ENCODE measurements at regions of chr1 and their contacts with region 1.

Region 1: DNA sequence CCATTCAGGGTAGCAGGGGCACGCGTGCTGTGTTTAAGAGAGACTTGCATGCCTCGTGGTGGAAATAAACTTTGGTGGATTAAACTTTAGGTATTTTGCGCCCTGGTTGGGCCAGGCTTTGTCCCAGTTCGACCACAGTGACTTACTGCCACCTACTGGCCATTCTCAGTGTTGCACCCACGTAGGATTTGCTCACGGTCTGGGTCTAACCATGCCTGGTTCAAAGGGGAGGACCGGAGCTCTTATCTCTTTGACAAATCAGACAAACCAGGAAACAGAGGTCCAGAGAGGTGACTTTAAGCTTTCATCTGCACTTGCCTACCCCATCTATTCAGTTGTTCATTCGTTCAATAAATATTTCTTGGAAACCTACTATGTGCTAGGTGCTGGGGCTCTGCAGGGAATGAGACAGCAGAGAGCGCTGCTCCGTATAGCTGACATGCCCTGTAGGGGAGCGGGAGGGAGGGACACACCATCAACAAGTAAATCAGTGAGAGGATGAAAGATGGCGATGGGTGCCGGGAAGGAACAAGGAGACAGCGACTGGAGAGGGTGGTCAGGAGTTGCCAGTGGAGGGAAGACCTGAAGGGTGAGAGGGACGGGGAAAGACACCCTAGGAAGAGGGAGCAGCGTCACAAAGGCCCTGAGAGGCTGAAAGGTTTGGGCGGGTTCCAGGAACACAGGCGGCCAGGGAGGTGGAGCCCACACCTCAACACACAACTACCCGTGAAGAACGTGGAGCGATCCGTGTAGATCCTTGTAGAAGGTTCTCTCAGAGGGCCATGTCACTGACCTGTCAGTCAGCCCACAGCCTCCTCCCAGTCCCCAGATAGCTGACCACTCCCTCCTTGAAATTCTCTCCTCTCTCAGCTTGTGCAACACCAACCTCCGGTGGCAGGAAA is 27.2 kb upstream of the TINAGL1 start:
- DNase-seq: peak; percentile 88
- H3K4me3 ChIP-seq: peak overlapping the region in 1 of 3 experiments; percentile 20
- H3K27ac ChIP-seq: peak overlapping the region; percentile 4
- H3K4me1 ChIP-seq: peaks cover 13% of the 10 kb centered on the region
- H3K27me3 ChIP-seq: no peaks in the 10 kb centered on the region
- CTCF ChIP-seq: peak; percentile 86 to 95
- POLR2A ChIP-seq: no peak

Region 2: DNA sequence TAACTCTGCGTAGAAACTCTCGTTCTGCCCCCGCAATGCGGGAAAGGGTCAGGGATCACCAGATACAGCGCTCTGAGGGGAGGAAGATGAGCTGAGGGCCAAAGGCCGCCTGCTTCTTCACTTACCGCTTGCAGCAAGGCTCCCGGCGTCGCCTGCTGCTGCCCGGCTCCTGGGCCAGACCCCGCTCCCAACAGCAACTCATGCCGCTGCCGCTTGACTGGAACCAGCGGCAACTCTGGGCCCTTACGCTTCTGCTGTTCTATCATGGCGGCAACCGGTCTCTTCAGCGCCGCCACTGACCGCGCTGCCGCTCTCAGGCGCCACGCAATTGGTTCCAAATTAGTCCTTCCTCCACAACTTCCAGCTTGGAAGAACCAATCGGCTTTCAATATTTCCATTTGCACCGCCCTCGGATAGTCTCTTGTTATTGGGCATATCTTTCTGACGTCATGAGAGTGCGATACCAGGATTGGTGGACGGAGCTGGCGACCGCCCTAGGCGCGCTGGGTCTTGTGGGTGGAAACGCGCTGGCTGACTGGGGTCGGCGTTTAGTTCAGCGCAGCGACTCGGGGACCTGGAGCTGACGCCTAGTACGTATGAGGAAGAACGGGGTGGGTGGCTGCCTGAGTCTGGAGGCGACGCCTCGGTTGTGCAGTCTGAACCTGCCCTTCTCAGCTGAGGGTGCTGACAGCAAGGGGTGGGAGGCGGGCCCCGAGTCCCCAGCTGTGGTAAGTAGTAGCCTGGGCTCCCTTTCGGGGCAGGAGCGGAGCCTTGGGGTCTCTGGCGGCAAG is 252.5 kb before region 1 on chr1 and contains the starts of genes SNRNP40 and ZCCHC17:
- CTCF ChIA-PET with region 1: no interaction called
- POLR2A ChIA-PET with region 1: no interaction called
- dilution Hi-C with region 1: no loop called
- intact Hi-C with region 1: loop called (anchors 1 kb)
- DNase-seq: peak; percentile 100
- H3K4me3 ChIP-seq: peak within 1 kb of the TSS; percentile 98 to 100 (median 98)
- H3K27ac ChIP-seq: peak within 1 kb of the TSS; percentile 81
- H3K4me1 ChIP-seq: peaks cover 20% of the 10 kb centered on the region
- H3K27me3 ChIP-seq: no peaks in the 10 kb centered on the region
- CTCF ChIP-seq: peak in 1 of 2 donors; percentile 13
- POLR2A ChIP-seq: peak; percentile 96
- total RNA-seq, gene SNRNP40: 78.1 and 85.3 TPM in 2 replicates
- total RNA-seq, gene ZCCHC17: 40.4 and 41.4 TPM in 2 replicates

Region 3: DNA sequence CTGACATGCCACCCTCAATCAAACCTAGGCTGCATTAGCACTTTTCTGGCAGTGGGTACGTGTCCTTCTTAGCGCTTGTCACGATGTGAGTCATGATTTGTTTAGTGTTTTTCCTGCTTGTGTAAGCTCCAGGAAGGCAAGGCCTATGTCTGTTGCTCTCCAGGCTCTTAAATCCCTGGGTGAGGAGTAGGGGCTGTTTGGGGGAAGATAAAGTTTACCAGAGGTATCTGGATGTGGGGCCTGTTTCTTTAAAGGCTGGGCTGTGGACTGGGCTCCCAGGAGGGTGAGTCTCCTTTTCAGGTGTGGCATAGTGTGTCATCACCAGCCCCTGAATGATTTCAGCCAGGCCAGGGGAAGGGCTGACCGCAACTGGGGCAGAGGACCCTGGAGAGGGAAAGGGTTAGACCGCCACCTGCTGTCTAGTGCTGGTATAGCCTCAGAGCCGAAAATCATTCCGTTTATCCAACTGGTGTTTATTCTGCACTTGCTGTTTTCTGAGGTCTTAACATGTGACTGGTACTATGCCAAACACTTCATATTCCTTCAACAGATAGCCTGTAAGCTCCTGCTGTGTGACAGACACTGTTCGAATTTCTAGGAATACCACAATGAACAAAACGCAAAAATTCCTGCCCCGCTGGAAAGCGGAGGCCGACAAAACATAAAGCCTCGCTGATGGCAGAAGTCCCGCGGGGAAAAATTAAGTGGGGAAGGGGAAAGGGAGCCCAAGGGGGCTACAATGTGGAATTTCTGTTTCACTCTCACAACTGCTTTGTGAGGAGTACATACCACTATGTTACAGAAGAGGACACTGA is 126.4 kb before region 1 on chr1:
- CTCF ChIA-PET with region 1: interaction called, 42 read pairs
- POLR2A ChIA-PET with region 1: no interaction called
- dilution Hi-C with region 1: no loop called
- intact Hi-C with region 1: loop called (anchors 1 kb)
- DNase-seq: peak; percentile 67
- H3K4me3 ChIP-seq: no peak overlapping the region
- H3K27ac ChIP-seq: peak overlapping the region; percentile 5
- H3K4me1 ChIP-seq: peaks cover 4% of the 10 kb centered on the region
- H3K27me3 ChIP-seq: no peaks in the 10 kb centered on the region
- CTCF ChIP-seq: peak; percentile 95
- POLR2A ChIP-seq: no peak

Region 4: GRCh38 chr1:31564134-31564989 is 15.2 kb after region 1 on chr1:
- CTCF ChIA-PET with region 1: interaction called, 23 read pairs
- POLR2A ChIA-PET with region 1: no interaction called
- dilution Hi-C with region 1: no loop called
- intact Hi-C with region 1: loop called (anchors 1 kb)
- DNase-seq: peak; percentile 83
- H3K4me3 ChIP-seq: no peak overlapping the region
- H3K27ac ChIP-seq: no peak overlapping the region
- H3K4me1 ChIP-seq: peaks cover 19% of the 10 kb centered on the region
- H3K27me3 ChIP-seq: no peaks in the 10 kb centered on the region
- CTCF ChIP-seq: peak; percentile 74 to 76
- POLR2A ChIP-seq: no peak

Region 5: GRCh38 chr1:31593770-31594632 is 44.8 kb after region 1 on chr1:
- CTCF ChIA-PET with region 1: interaction called, 15 read pairs
- POLR2A ChIA-PET with region 1: no interaction called
- dilution Hi-C with region 1: no loop called
- intact Hi-C with region 1: loop called (anchors 1 kb)
- DNase-seq: peak; percentile 73
- H3K4me3 ChIP-seq: no peak overlapping the region
- H3K27ac ChIP-seq: no peak overlapping the region
- H3K4me1 ChIP-seq: peaks cover 28% of the 10 kb centered on the region
- H3K27me3 ChIP-seq: no peaks in the 10 kb centered on the region
- CTCF ChIP-seq: peak; percentile 95 to 96
- POLR2A ChIP-seq: no peak

Region 6: DNA sequence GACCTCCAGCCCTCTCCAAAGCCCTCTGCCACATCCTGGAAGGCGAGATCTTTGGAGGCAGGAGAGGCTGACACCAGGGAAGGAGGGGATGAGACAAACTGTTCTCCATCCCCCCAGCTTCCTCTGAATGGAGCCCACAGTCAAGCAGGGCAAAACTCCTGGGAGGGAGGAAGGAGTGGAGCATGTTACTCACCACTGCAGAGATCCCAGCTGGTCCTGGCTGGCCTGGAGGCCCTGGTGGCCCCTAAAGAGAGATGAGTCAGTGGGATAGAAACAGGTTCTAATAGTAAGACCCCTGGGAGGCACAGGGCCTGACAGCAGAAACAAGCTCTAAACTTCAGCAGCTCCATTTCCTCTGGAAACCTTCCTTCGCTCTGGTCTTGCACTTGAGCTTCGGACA is 109.6 kb after region 1 on chr1:
- CTCF ChIA-PET with region 1: no interaction called
- POLR2A ChIA-PET with region 1: no interaction called
- dilution Hi-C with region 1: no loop called
- intact Hi-C with region 1: no loop called
- DNase-seq: no peak
- H3K4me3 ChIP-seq: no peak overlapping the region
- H3K27ac ChIP-seq: no peak overlapping the region
- H3K4me1 ChIP-seq: no peaks in the 10 kb centered on the region
- H3K27me3 ChIP-seq: no peaks in the 10 kb centered on the region
- CTCF ChIP-seq: no peak
- POLR2A ChIP-seq: no peak

Region 7: DNA sequence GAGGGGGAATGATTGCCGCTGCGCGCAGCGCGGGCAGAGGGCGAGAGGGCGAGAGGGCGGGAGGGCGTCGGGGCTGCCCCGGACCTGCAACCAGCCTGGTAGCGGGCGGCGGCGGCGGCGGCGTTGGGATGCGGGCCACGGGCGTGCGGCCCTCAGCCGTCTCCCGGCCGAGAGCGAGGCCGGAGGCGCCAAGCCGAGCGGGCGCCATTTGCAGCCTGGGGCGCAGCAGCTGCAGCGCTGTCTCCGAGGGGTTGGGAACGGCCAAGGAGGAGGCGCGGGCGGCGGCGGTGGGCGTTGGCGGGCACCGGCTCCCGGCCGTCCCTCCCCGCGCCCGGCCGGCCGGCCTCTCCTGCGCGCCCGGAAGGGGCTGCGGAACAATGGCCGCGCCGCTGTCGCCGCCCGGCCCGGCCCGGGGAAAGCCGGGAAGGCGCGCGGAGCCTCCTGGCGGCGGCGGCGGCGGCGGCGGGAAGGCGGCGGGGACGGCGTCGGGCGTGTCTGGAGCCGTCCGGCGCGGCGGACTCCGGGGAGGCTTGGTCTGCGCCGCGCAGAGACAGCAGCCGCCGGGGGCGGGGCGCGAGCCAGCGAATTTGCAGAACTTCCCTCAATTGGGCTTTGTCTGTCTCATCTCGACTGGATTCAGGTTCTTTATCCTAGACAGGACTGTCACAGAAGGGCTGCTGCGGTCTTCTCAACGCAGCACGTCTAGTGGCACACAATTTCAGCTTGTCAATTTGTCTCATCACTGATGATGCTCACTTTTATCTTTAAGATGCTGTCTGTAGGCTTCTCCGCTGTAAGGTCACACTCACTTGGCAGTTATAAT is 951.4 kb after region 1 on chr1:
- CTCF ChIA-PET with region 1: no interaction called
- POLR2A ChIA-PET with region 1: interaction called, 10 read pairs
- dilution Hi-C with region 1: no loop called
- intact Hi-C with region 1: no loop called
- DNase-seq: peak; percentile 49
- H3K4me3 ChIP-seq: peak overlapping the region; percentile 48 to 83 (median 74)
- H3K27ac ChIP-seq: peak overlapping the region; percentile 55
- H3K4me1 ChIP-seq: peaks cover 30% of the 10 kb centered on the region
- H3K27me3 ChIP-seq: no peaks in the 10 kb centered on the region
- CTCF ChIP-seq: no peak
- POLR2A ChIP-seq: peak; percentile 73

Measured in endothelial cell of umbilical vein (primary cell).